K562 (cell line): ENCODE measurements at regions of chr11 and their contacts with region 1.

Region 1: GRCh38 chr11:1694064-1694845 is 2.7 kb upstream of the KRTAP5-6 start:
- DNase-seq: peak; percentile 87 to 95 (median 92)
- ATAC-seq: peak; percentile 99
- H3K4me3 ChIP-seq: no peak overlapping the region
- H3K27ac ChIP-seq: no peak overlapping the region
- H3K4me1 ChIP-seq: peaks cover 0 to 16% of the 10 kb centered on the region in 2 experiments; a peak in 2 of 5 replicates
- H3K27me3 ChIP-seq: peaks cover 7 to 63% of the 10 kb centered on the region in 2 experiments; a peak in 3 of 5 replicates
- CTCF ChIP-seq: peak; percentile 83 to 97 (median 91)
- EP300 ChIP-seq: no peak
- POLR2A ChIP-seq: no peak
- RAD21 ChIP-seq: peak; percentile 94 to 97

Region 2: GRCh38 chr11:1652771-1653540 is 41.3 kb before region 1 on chr11:
- CTCF ChIA-PET with region 1: interaction called, 3 read pairs
- POLR2A ChIA-PET with region 1: no interaction called
- in situ Hi-C with region 1: loop called (anchors 5 kb)
- intact Hi-C with region 1: loop called (anchors 5 kb)
- DNase-seq: peak; percentile 72 to 91 (median 88)
- ATAC-seq: peak; percentile 96
- H3K4me3 ChIP-seq: no peak overlapping the region
- H3K27ac ChIP-seq: no peak overlapping the region
- H3K4me1 ChIP-seq: peaks cover 0 to 15% of the 10 kb centered on the region in 2 experiments; a peak in 2 of 5 replicates
- H3K27me3 ChIP-seq: peaks cover 34 to 89% of the 10 kb centered on the region in 2 experiments
- CTCF ChIP-seq: peak; percentile 85 to 91 (median 90)
- EP300 ChIP-seq: no peak
- POLR2A ChIP-seq: no peak
- RAD21 ChIP-seq: peak; percentile 84 to 91

Region 3: DNA sequence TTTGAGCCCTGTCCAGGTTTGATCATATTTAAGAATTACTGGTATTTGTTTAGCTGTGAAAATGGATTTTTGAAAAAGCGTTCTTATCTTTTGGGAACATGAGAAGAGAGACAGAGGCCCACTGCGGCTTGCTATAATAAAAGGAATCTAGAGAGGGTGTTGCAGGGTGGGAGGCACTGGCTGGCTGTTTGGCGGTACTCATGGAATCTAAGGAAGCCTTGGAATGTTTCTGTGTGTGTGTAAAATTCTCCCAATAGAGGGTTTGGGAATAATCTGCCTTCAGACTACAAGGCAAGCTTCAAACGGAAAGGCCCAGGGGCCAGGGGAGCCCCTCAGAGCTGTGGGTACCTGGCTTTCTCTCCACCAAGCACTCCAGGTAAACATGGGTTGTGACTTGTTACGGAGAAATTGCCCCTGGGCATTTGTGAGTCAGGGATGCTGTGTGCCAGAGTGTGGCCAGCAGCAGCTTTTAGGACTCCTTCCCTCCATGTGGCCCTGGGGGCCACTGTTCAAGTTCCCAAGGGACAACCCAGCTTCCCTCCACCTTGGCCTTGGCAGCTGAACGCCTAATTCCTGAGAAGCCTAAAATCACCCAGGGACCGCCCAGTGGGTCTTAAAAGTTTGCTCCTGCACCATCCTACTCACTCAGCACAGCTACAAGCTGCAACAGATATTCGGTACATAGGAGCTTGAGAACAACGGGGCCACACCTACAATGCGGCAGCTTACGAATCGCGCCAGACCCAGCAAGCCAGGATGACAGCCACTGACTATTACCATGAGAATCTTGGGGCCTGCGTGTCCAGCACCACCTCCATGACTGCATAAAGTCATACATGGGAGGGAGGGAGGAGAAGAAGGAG is 126.4 kb after region 1 on chr11:
- CTCF ChIA-PET with region 1: interaction called, 16 read pairs
- POLR2A ChIA-PET with region 1: interaction called, 3 read pairs
- in situ Hi-C with region 1: loop called (anchors 5 kb)
- intact Hi-C with region 1: no loop called
- DNase-seq: no peak
- ATAC-seq: no peak
- H3K4me3 ChIP-seq: no peak overlapping the region
- H3K27ac ChIP-seq: no peak overlapping the region
- H3K4me1 ChIP-seq: peaks cover 0 to 16% of the 10 kb centered on the region in 2 experiments; a peak in 2 of 5 replicates
- H3K27me3 ChIP-seq: peaks cover under 1 to 11% of the 10 kb centered on the region in 2 experiments; a peak in 2 of 5 replicates
- CTCF ChIP-seq: no peak
- EP300 ChIP-seq: no peak
- POLR2A ChIP-seq: no peak
- RAD21 ChIP-seq: no peak

Region 4: DNA sequence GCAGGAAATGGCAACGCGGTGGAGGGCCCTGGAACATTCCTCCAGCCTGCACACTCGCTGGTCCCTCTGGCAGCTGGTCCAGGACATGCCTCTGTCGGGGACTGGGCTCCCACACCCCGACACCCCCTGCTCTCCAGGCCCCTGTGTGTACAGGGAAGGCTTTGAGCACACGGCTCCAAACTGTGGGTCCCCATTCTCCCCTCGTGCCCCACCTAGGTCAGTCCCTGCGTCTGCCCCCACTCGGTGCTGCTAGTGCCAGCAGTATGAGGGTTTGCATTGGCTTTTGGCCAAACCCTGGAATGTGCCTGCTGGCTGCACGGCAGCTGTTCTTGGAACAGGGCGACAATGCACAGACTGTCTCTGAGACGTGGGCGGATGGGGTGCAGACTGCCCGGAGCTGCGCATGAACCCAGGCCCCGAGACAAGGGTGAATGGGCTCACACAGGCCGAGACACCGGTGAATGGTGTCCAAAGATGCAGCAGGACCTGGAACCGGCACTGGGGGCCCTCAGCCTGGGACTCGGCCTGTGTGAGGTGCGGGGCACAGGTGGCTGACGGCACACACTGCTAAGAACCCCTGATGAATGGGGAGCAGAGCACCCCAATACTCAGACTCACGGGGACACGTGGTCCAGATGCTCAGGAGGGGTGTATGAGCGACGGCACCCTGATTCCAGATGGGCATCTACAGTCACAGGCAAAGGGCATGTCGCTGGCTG is 133.0 kb after region 1 on chr11:
- CTCF ChIA-PET with region 1: interaction called, 77 read pairs
- POLR2A ChIA-PET with region 1: interaction called, 6 read pairs
- in situ Hi-C with region 1: loop called (anchors 5 kb)
- intact Hi-C with region 1: loop called (anchors 1 kb)
- DNase-seq: no peak
- ATAC-seq: no peak
- H3K4me3 ChIP-seq: no peak overlapping the region
- H3K27ac ChIP-seq: no peak overlapping the region
- H3K4me1 ChIP-seq: peaks cover 0 to 50% of the 10 kb centered on the region in 2 experiments; a peak in 2 of 5 replicates
- H3K27me3 ChIP-seq: peaks cover 0 to 44% of the 10 kb centered on the region in 2 experiments; a peak in 3 of 5 replicates
- CTCF ChIP-seq: no peak
- EP300 ChIP-seq: no peak
- POLR2A ChIP-seq: no peak
- RAD21 ChIP-seq: no peak

Region 5: GRCh38 chr11:1832211-1832919 is 138.1 kb after region 1 on chr11:
- CTCF ChIA-PET with region 1: interaction called, 77 read pairs
- POLR2A ChIA-PET with region 1: interaction called, 6 read pairs
- in situ Hi-C with region 1: no loop called
- intact Hi-C with region 1: loop called (anchors 1 kb)
- DNase-seq: peak; percentile 51 to 87 (median 84)
- ATAC-seq: peak; percentile 90
- H3K4me3 ChIP-seq: no peak overlapping the region
- H3K27ac ChIP-seq: no peak overlapping the region
- H3K4me1 ChIP-seq: peaks cover 0 to 40% of the 10 kb centered on the region in 2 experiments; a peak in 2 of 5 replicates
- H3K27me3 ChIP-seq: peaks cover 3 to 75% of the 10 kb centered on the region in 2 experiments; a peak in 4 of 5 replicates
- CTCF ChIP-seq: peak; percentile 79 to 86 (median 81)
- EP300 ChIP-seq: no peak
- POLR2A ChIP-seq: no peak
- RAD21 ChIP-seq: peak; percentile 87 to 91

Region 6: GRCh38 chr11:1876361-1877063 is 182.3 kb after region 1 on chr11:
- CTCF ChIA-PET with region 1: no interaction called
- POLR2A ChIA-PET with region 1: no interaction called
- in situ Hi-C with region 1: no loop called
- intact Hi-C with region 1: loop called (anchors 5 kb)
- DNase-seq: peak; percentile 63 to 73 (median 73)
- ATAC-seq: peak; percentile 79
- H3K4me3 ChIP-seq: no peak overlapping the region
- H3K27ac ChIP-seq: no peak overlapping the region
- H3K4me1 ChIP-seq: peaks cover 0 to 34% of the 10 kb centered on the region in 2 experiments; a peak in 2 of 5 replicates
- H3K27me3 ChIP-seq: peaks cover 0 to 58% of the 10 kb centered on the region in 2 experiments; a peak in 2 of 5 replicates
- CTCF ChIP-seq: peak; percentile 66 to 86 (median 78)
- EP300 ChIP-seq: no peak
- POLR2A ChIP-seq: no peak
- RAD21 ChIP-seq: peak; percentile 22 to 56; a peak in 2 of 4 replicates

Region 7: DNA sequence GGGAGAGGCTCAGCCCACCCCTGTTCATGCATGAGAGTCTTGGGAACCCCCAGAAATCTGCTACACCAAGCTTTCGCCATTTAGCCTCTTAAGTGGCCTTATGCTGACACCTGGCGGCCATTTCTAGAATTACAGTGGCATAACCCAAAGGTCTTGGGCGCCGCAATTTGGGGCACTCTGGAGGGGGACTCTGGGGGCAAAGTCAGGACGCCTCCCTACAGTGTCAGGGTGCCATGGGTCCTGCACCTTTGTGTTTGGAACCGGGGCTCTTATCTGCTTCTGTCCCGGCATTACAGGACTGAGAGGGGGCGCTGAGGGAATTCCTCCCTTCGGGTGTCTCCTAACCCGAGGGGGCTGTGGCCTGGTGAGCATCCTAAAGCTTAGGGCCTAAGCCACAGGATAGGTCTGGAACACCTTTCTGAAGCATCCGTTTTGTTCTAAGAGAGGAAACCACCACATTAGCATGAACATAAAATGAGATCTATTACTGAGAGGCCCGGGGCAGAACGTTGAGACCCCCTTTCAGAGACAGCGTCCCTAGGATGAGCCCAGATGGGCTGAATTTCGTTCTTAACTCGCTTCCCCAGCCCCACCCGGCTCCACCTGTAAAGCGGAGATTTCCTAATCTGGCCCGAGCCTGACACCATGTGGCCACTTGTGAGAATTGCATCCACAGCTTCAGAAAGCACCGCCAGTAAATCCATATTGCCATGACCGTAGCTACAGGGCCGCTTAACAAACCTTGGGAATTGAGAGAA is 457.4 kb after region 1 on chr11:
- CTCF ChIA-PET with region 1: interaction called, 3 read pairs
- POLR2A ChIA-PET with region 1: no interaction called
- in situ Hi-C with region 1: loop called (anchors 10 kb)
- intact Hi-C with region 1: no loop called
- DNase-seq: peak; percentile 80 to 87 (median 82)
- ATAC-seq: peak; percentile 80
- H3K4me3 ChIP-seq: no peak overlapping the region
- H3K27ac ChIP-seq: no peak overlapping the region
- H3K4me1 ChIP-seq: peaks cover 0 to 26% of the 10 kb centered on the region in 2 experiments; a peak in 1 of 5 replicates
- H3K27me3 ChIP-seq: peaks cover 0 to 44% of the 10 kb centered on the region in 2 experiments; a peak in 3 of 5 replicates
- CTCF ChIP-seq: peak; percentile 75 to 83 (median 80)
- EP300 ChIP-seq: no peak
- POLR2A ChIP-seq: no peak
- RAD21 ChIP-seq: peak; percentile 53 to 76